Activated T-helper 2 cell treated with anti-CD3 and anti-CD28 coated beads, Interferon-gamma antibody, Interleukin-2, Interleukin-4, amounts not matched to agents 10 μg/mL and 5 μg/mL and 100 μg/mL, durations not matched to agents 14 hours and 24 hours and 36 hours (primary cell): ENCODE measurements at regions of chr10 and their contacts with region 1.

Region 1: DNA sequence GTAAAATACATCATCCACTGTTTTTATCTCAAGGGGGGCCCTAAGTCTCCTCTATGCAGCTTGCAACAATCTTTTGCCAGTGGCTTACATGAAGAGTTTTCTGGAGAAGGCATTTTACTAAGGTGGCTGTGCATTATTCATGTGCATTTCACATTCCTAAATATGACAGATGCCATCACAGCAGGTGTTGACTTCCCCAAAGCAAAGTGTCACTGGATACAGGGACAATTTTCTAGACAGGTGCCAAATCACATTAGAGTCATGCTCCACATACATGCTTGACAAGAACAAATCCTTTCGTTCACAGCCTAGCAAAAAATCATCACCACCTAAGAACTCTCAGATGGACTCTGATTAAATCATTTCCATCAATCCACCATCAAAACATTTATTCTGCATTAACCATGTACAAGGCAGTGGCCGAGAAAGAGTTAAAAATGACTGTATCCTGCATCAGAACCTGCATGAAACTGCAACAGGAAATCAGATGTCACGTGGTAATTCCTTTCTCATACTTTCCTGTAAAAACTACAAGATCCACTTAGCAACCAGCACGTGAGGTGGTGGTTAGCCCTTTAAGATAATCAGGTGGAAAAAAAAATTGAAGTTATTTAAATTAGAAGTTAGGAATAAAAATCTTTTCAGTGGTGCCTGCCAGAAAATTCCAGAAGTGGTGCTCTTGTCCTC is 88.2 kb upstream of the AFAP1L2 start:
- DNase-seq: peak; percentile 22
- H3K4me3 Mint-ChIP-seq: no peak overlapping the region
- H3K27ac Mint-ChIP-seq: peak overlapping the region; percentile 67
- H3K4me1 Mint-ChIP-seq: peaks cover 56% of the 10 kb centered on the region
- H3K27me3 Mint-ChIP-seq: no peaks in the 10 kb centered on the region

Region 2: DNA sequence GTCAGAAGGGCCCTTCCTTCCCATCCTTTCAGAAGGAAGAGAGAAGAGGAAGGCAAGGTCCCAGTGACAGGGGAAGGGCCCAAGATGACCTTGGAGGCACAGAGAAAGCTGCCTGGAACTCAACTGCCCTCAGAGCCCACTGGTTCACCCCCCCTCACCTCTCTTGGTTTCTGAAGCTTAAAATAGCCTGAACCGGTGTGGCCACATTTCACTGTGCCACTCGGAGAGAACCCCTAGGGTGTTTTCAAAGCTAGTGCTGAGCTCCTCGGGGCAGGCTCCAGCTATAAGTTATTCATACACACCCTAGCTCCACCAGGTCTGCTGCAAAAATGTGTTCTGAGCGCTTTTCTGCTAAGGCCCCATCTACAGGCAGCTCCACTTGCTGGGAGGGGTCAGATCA is 509.7 kb before region 1 on chr10:
- intact Hi-C with region 1: no loop called
- DNase-seq: no peak
- H3K4me3 Mint-ChIP-seq: no peak overlapping the region
- H3K27ac Mint-ChIP-seq: no peak overlapping the region
- H3K4me1 Mint-ChIP-seq: peaks cover 14% of the 10 kb centered on the region
- H3K27me3 Mint-ChIP-seq: peaks cover 47% of the 10 kb centered on the region

Region 3: DNA sequence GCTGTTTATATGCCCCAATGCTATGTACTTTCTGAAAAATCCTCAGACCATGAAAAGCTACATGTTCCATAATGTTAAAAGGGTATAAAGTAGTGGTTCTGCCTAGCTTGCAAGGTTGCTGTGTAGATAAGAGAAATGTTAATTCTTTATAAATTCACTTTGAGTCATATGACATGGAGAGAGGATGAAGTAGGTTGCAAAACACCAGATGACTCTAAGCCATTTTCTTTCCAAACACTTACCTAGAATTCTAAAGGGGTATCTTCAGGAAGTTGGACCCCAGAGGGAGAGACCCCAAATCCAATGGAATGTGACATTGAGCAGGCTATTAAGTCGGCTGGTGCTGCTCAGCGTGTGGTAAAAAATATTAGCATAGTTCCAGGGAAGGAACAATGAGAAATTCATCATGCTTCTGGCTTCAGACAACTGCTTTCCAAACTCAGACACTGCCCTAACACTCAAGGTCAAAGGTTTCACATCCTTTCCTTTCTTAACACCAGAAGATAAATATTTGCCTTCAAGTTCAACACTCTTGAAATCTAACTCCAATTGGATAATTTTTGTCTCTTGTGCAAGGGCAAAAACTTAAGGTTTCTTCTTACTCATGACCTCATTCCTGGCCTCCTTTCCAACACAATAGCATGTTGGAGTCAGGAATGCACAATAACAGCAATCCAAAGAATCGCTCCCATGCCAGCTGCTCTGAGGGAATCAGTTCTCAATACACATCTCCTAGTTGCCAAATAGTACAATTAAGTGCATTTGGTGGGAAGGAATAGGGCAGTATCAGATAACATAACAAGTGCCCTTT is 12.5 kb after region 1 on chr10:
- intact Hi-C with region 1: loop called (anchors 1 kb)
- DNase-seq: no peak
- H3K4me3 Mint-ChIP-seq: no peak overlapping the region
- H3K27ac Mint-ChIP-seq: peak overlapping the region; percentile 56
- H3K4me1 Mint-ChIP-seq: peaks cover 67% of the 10 kb centered on the region
- H3K27me3 Mint-ChIP-seq: no peaks in the 10 kb centered on the region